CD4-positive, alpha-beta T cell (primary cell): ENCODE measurements at regions of chr18 and their contacts with region 1.

Region 1: DNA sequence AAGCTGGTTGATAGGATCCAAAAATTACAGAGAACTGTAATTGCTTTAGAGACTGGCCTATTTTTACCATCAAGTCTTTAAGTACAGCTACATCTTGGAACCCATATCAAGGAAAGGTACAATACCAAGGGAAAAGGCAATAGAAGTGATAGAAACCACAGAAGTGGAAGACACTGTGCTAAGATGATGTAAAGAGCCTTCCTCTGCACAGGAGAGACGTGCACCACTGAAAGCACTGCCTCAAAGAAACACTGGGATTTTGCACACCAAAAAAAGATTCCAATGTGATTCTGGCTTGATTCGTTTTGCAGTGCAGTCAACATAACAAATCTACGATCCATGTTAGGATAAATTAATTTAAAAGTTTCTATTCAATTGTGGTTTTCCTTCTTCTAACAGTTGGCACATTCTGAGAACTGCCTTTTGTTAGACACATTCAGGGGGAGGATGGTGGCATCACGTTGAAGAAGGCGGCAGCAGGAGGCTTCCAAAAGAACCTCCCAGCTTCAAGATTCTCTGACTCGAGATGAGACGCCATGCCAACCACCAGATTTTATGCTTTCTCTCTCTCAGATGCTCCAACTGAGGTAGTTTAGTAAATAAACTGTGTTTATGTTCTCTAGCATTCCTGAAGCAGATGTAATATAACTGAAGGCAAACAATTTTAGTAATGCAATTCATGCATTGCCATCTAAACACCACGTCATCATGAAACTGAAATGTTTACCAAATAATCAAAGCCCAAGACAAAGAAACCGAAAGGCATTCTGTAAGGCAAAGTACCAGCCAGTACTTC is 102.9 kb downstream of the BCL2 start:
- DNase-seq: peak in 7 of 14 experiments; percentile 16 to 69 (median 46)
- ATAC-seq: peak; percentile 71
- H3K4me3 ChIP-seq: peak overlapping the region; percentile 24
- H3K4me3 Mint-ChIP-seq: peak overlapping the region; percentile 86
- H3K27ac ChIP-seq: peak overlapping the region; percentile 16 to 73
- H3K27ac Mint-ChIP-seq: peak overlapping the region; percentile 99
- H3K4me1 ChIP-seq: peaks cover 60% of the 10 kb centered on the region
- H3K4me1 Mint-ChIP-seq: peaks cover 89% of the 10 kb centered on the region
- H3K27me3 ChIP-seq: no peaks in the 10 kb centered on the region
- H3K27me3 Mint-ChIP-seq: no peaks in the 10 kb centered on the region
- CTCF ChIP-seq: no peak

Region 2: GRCh38 chr18:63161761-63162195 is 54.9 kb before region 1 on chr18:
- CTCF ChIA-PET with region 1: no interaction called
- POLR2A ChIA-PET with region 1: interaction called, 4 read pairs
- intact Hi-C with region 1: loop called in 1 of 2 experiments (anchors 2 kb)
- DNase-seq: peak; percentile 66 to 94 (median 74)
- ATAC-seq: peak; percentile 84
- H3K4me3 ChIP-seq: peak overlapping the region; percentile 38
- H3K4me3 Mint-ChIP-seq: peak overlapping the region; percentile 65
- H3K27ac ChIP-seq: peak overlapping the region; percentile 95 to 96
- H3K27ac Mint-ChIP-seq: peak overlapping the region; percentile 91
- H3K4me1 ChIP-seq: peaks cover 81% of the 10 kb centered on the region
- H3K4me1 Mint-ChIP-seq: peaks cover 78% of the 10 kb centered on the region
- H3K27me3 ChIP-seq: no peaks in the 10 kb centered on the region
- H3K27me3 Mint-ChIP-seq: no peaks in the 10 kb centered on the region
- CTCF ChIP-seq: no peak

Region 3: DNA sequence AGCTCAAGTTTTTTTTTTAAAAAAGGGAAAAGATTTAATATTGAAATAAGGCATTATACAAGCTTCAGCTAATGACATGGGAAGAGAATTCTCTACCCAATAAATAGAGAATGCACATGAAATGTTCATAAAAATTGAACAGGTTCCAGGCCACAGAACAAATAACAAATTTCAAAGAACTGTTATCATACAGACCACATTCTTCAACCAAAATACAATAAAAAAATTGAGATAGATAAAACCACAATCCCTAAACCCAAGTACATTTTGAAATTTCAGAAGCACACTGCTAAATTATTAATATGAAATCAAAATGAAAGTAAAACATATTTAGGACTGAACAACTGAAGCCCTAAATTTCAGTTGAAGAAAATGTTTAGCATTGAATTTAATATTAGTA is 13.3 kb after region 1 on chr18:
- CTCF ChIA-PET with region 1: interaction called, 4 read pairs
- POLR2A ChIA-PET with region 1: interaction called, 5 read pairs
- intact Hi-C with region 1: loop called in 1 of 2 experiments (anchors 2 kb)
- DNase-seq: no peak
- ATAC-seq: no peak
- H3K4me3 ChIP-seq: peak overlapping the region; percentile 21
- H3K4me3 Mint-ChIP-seq: peak overlapping the region; percentile 81
- H3K27ac ChIP-seq: peak overlapping the region; percentile 6 to 18
- H3K27ac Mint-ChIP-seq: peak overlapping the region; percentile 87
- H3K4me1 ChIP-seq: peaks cover 30% of the 10 kb centered on the region
- H3K4me1 Mint-ChIP-seq: peaks cover 85% of the 10 kb centered on the region
- H3K27me3 ChIP-seq: no peaks in the 10 kb centered on the region
- H3K27me3 Mint-ChIP-seq: no peaks in the 10 kb centered on the region
- CTCF ChIP-seq: no peak

Region 4: DNA sequence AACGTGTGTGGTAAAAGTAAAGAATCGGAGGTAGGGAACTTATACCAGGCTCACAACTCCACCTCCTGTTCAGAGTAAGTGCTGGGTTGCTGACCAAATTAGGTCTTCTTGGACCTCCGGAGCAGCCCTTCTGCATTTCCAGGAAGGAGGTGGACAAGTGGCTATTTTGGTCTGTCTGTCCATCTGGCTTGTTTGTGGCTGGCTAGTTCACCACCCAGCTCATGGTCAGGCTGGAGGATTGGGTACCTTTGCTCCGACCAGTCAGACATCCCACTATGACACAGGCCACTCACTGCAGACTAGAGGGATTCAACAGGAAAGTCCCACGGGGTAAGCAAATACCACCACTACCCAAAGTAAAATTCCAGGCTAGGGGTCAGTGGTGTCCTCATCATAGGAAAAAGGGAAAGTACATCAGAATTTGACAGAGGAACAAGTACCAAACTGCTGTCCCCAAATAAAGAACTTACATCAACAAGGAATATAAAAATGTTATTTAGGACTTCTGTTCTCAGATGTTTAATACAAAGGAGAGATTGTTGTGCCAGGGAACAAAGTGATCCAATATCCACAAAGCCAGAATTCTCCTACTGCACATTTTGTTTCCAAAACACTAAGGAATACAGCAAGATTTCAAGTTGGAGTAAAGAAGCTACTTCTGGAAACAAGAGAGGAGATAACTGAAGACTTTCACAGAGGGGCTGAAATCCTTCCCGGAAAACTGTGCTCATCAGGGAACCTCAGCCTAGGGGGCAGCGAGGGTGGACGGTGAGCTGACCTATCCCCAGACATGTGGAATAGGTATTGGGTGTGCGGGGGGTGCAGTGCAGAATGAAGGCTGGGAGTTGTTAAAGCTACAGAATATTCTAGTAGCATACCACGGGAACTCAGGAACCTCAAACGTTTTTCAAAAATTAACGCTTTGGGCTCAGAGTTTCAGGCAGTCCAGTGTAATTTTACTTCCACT is 45.9 kb after region 1 on chr18:
- CTCF ChIA-PET with region 1: no interaction called
- POLR2A ChIA-PET with region 1: no interaction called
- intact Hi-C with region 1: no loop called
- DNase-seq: no peak
- ATAC-seq: no peak
- H3K4me3 ChIP-seq: no peak overlapping the region
- H3K4me3 Mint-ChIP-seq: no peak overlapping the region
- H3K27ac ChIP-seq: no peak overlapping the region
- H3K27ac Mint-ChIP-seq: no peak overlapping the region
- H3K4me1 ChIP-seq: peaks cover 32% of the 10 kb centered on the region
- H3K4me1 Mint-ChIP-seq: peaks cover 48% of the 10 kb centered on the region
- H3K27me3 ChIP-seq: no peaks in the 10 kb centered on the region
- H3K27me3 Mint-ChIP-seq: no peaks in the 10 kb centered on the region
- CTCF ChIP-seq: no peak